Lower lobe of right lung (tissue), 2 donors: ENCODE measurements at regions of chr11 and their contacts with region 1.

Region 1: DNA sequence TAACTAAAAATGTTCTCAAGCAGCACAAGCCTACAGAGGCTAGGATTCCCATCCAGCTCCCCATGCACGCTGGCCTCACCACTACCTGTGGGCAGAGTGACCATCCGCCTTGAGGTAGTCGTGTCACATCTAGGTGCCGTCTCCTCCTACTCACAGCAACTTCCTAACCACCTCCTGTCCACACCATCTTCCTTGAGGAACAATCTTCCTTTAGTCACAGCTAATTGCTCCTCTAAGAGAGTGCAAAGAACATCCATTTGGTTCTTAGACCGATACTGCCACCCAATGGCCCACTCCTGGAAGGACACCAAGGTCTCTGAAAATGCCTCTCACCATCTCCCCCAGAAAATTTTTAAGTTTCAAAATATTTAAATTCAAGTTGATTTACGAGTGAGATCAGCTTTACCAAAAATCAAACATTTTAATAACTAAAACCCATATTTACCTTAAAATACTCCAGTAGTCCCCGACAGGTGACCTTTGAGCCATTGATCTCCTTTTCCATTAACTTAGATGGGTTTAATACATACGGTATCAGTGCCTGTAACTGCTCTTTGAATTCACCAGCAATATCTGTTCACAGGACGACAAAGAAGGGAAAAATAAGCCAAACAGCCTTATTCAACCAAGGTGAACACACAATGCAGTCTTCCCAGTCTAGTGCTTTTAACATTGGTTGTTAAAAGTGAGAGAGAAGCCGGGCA is 21.7 kb upstream of the PLAAT3 start:
- DNase-seq: no peak
- ATAC-seq: peak; percentile 84 to 88
- H3K4me3 ChIP-seq: no peak overlapping the region
- H3K27ac ChIP-seq: no peak overlapping the region
- H3K4me1 ChIP-seq: no peaks in the 10 kb centered on the region
- H3K27me3 ChIP-seq: no peaks in the 10 kb centered on the region
- CTCF ChIP-seq: peak; percentile 83

Region 2: DNA sequence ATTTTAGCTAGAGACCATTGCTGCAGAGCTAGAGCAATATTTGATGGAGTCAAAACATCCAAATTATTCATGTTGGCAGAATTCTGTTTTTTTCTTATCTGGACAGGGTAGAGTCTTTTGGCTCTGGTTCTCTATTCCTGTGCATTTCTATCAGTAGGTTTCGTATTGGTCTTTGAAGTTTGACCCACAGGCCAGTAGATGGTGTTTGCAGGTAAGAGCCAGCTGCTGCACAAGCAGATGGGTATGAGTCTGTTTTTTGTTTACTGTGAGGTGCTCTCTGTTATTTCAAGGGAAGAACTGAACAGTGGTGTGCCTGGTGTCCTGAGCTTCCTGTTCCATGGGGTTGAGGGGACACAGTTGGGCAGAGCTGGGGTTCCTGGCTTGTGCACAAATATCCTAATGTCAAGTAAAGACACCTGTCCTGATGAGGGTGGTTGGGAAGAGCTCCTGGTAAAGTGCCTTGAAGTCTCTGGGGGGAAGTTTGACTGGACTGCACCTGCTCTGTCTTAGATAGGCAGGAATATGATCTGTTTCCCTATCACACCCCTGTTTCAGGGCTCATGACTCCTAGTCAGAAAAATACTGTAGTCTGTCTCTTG is 358.5 kb before region 1 on chr11:
- intact Hi-C with region 1: no loop called
- DNase-seq: no peak
- ATAC-seq: no peak
- H3K4me3 ChIP-seq: no peak overlapping the region
- H3K27ac ChIP-seq: no peak overlapping the region
- H3K4me1 ChIP-seq: no peaks in the 10 kb centered on the region
- H3K27me3 ChIP-seq: no peaks in the 10 kb centered on the region
- CTCF ChIP-seq: no peak

Region 3: GRCh38 chr11:63489879-63490278 is 146.0 kb before region 1 on chr11:
- intact Hi-C with region 1: loop called (anchors 10 kb)
- DNase-seq: no peak
- ATAC-seq: no peak
- H3K4me3 ChIP-seq: no peak overlapping the region
- H3K27ac ChIP-seq: no peak overlapping the region
- H3K4me1 ChIP-seq: peaks cover 30% of the 10 kb centered on the region
- H3K27me3 ChIP-seq: no peaks in the 10 kb centered on the region
- CTCF ChIP-seq: no peak

Region 4: DNA sequence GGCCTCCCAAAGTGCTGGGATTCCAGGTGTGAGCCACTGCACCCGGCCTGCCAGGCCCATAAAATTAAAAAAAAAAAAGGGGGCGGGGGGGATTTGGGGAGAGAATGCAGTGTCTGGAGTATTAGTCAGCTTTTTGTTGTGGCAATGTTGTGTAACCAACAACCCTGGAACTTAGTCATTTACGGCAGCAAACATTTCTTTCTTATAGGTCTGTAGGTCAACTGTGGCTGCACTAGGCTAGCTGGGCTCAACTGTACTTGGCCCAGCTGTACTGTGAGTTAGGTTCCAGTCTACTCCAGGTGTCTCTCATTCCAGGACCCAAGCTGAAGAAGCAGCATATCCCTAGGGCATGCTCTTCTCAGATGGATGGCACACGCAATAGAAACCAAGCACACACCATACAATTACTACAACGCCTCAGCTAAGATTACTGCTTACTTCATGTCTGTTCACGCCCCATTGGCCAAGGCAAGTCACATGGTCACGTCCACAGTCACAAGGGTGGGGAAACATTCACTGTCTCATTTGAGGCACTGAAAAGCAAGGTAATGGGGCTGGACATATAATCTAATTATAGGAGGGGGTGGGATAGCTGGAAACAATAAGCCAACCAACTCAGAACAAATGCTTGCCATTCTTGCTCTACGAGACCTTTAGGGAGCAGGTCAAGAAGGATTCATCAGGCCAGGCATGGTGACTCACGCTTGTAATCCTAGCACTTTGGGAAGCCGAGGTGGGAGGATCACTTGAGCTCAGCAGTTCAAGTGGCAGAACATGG is 166.9 kb after region 1 on chr11:
- intact Hi-C with region 1: no loop called
- DNase-seq: no peak
- ATAC-seq: no peak
- H3K4me3 ChIP-seq: no peak overlapping the region
- H3K27ac ChIP-seq: no peak overlapping the region
- H3K4me1 ChIP-seq: no peaks in the 10 kb centered on the region
- H3K27me3 ChIP-seq: no peaks in the 10 kb centered on the region
- CTCF ChIP-seq: no peak